Endothelial cell of umbilical vein (primary cell): ENCODE measurements at regions of chr5 and their contacts with region 1.

Region 1: GRCh38 chr5:56900858-56901578 is 8.4 kb upstream of the SETD9 start:
- DNase-seq: peak; percentile 57
- H3K4me3 ChIP-seq: no peak overlapping the region
- H3K27ac ChIP-seq: no peak overlapping the region
- H3K4me1 ChIP-seq: peaks cover 5% of the 10 kb centered on the region
- H3K27me3 ChIP-seq: peaks cover 3 to 6% of the 10 kb centered on the region in 2 experiments
- CTCF ChIP-seq: peak; percentile 53 to 57
- POLR2A ChIP-seq: no peak

Region 2: DNA sequence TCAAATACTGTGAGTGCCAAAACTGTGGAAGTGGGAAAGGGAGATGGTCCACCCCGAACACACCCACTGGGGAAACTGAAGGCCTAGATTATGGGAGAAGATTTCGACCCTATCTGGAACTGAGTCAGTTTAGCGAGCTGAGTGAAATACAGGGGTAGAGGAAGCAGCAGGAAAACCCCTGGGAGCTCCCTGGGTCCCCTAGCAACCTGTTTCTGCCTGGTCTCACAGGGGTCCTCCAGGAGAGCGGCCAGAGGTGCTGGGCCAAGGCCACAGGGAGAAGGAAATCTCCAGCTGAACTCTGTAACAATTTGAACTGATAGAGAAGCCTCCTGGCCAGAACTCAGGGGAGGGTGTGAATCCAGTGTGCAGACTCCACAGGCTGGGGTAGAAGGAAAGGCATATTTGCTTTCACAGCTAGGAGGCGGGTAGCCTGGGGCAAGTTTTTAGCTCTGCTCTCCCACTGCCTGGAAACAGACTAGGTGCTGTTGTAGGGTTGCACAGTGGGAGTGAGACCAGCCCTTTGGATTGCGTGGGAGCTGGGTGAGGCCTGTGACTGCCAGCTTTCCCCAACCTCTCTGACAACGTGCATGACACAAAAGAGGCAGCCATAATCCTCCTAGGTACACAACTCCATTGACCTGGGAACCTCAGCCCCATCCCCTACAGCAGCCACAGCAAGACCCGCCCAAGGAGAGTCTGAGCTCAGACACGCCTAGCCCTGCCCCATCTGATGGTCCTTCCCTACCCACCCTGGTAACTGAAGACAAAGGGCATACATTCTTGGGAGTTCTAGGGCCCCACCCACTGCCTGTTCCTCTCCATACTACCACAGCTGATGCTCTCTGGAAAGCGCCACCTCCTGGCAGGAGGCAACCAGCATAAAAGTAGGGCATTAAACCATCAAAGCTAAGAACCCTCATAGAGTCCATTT is 194.0 kb after region 1 on chr5:
- CTCF ChIA-PET with region 1: interaction called, 23 read pairs
- POLR2A ChIA-PET with region 1: no interaction called
- dilution Hi-C with region 1: no loop called
- intact Hi-C with region 1: loop called (anchors 1 kb)
- DNase-seq: no peak
- H3K4me3 ChIP-seq: no peak overlapping the region
- H3K27ac ChIP-seq: no peak overlapping the region
- H3K4me1 ChIP-seq: no peaks in the 10 kb centered on the region
- H3K27me3 ChIP-seq: no peaks in the 10 kb centered on the region
- CTCF ChIP-seq: peak; percentile 15 to 40
- POLR2A ChIP-seq: no peak

Region 3: GRCh38 chr5:57221049-57221568 is 320.1 kb after region 1 on chr5:
- CTCF ChIA-PET with region 1: interaction called, 10 read pairs
- POLR2A ChIA-PET with region 1: no interaction called
- dilution Hi-C with region 1: no loop called
- intact Hi-C with region 1: loop called (anchors 1 kb)
- DNase-seq: peak; percentile 83
- H3K4me3 ChIP-seq: no peak overlapping the region
- H3K27ac ChIP-seq: no peak overlapping the region
- H3K4me1 ChIP-seq: peaks cover 3% of the 10 kb centered on the region
- H3K27me3 ChIP-seq: no peaks in the 10 kb centered on the region
- CTCF ChIP-seq: peak; percentile 38 to 45
- POLR2A ChIP-seq: no peak

Region 4: DNA sequence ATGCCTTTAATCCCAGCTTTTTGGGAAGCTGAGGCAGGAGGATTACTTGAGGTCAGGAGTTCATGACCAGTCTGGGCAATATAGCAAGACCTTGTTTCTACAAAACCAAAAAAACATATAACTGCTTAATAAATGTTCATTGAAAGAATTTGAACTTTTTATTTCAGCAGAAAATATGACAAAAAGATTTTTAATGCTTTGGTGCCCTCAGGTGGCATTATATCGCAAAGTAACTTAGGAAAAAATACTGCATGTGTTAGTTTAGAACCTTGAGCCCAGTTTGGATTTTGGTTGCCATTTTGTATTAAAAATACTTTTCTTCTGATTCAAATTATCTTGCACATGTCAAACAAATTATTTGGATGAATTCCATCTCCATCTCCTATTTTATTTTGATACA is 376.1 kb after region 1 on chr5:
- CTCF ChIA-PET with region 1: interaction called, 39 read pairs
- POLR2A ChIA-PET with region 1: no interaction called
- dilution Hi-C with region 1: no loop called
- intact Hi-C with region 1: loop called (anchors 1 kb)
- DNase-seq: peak; percentile 54
- H3K4me3 ChIP-seq: no peak overlapping the region
- H3K27ac ChIP-seq: no peak overlapping the region
- H3K4me1 ChIP-seq: no peaks in the 10 kb centered on the region
- H3K27me3 ChIP-seq: peaks cover 0 to 3% of the 10 kb centered on the region in 2 experiments
- CTCF ChIP-seq: peak; percentile 11 to 18
- POLR2A ChIP-seq: no peak